A549 (cell line): ENCODE measurements at regions of chr11 and their contacts with region 1.

Region 1: DNA sequence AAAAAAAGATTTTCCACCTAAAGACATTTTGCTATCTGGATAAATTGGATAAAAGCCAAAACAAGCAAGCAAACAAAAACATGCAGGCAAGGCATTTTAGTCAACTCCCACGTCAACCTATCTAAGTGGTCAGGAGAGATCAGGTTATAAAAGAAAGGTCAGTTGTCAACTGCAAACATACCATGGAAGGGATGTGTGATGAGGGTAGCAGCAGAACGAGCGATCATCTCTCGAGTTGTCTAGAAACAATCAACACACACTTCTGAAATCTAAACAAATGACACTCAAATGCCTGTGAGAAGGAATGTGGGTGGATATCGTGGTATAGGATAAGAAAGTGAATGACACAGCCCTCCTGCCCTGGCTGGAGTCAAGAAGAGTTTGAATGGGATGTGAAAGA is 10.9 kb downstream of the MTCH2 start:
- DNase-seq: peak in 1 of 2 experiments; percentile 29
- ATAC-seq: peak in 1 of 2 experiments; percentile 56; a peak in 3 of 6 replicates
- H3K4me3 ChIP-seq: no peak overlapping the region
- H3K27ac ChIP-seq: no peak overlapping the region
- H3K4me1 ChIP-seq: no peaks in the 10 kb centered on the region
- CTCF ChIP-seq: no peak
- EP300 ChIP-seq: no peak
- POLR2A ChIP-seq: no peak
- RAD21 ChIP-seq: no peak

Region 2: GRCh38 chr11:47514825-47515647 is 116.4 kb before region 1 on chr11:
- CTCF ChIA-PET with region 1: no interaction called
- POLR2A ChIA-PET with region 1: no interaction called
- DNase-seq: peak in 1 of 2 experiments; percentile 26
- ATAC-seq: peak; percentile 69 to 70; a peak in 5 of 6 replicates
- H3K4me3 ChIP-seq: no peak overlapping the region
- H3K27ac ChIP-seq: peak overlapping the region in 1 of 2 experiments; percentile 79; a peak in 3 of 6 replicates
- H3K4me1 ChIP-seq: peaks cover 78% of the 10 kb centered on the region
- CTCF ChIP-seq: no peak
- EP300 ChIP-seq: no peak
- POLR2A ChIP-seq: no peak
- RAD21 ChIP-seq: no peak

Region 3: GRCh38 chr11:47565340-47566148 is 65.9 kb before region 1 on chr11 and contains the start of gene PTPMT1:
- CTCF ChIA-PET with region 1: no interaction called
- POLR2A ChIA-PET with region 1: interaction called, 11 read pairs
- DNase-seq: peak; percentile 55 to 70
- ATAC-seq: peak; percentile 95 to 97
- H3K4me3 ChIP-seq: peak within 1 kb of the TSS; percentile 92
- H3K27ac ChIP-seq: peak within 1 kb of the TSS; percentile 95 to 96
- H3K4me1 ChIP-seq: peaks cover 17% of the 10 kb centered on the region
- CTCF ChIP-seq: no peak
- EP300 ChIP-seq: no peak
- POLR2A ChIP-seq: peak; percentile 87
- RAD21 ChIP-seq: no peak
- polyA plus RNA-seq, gene PTPMT1: 58.8 and 69.2 TPM in 2 replicates

Region 4: DNA sequence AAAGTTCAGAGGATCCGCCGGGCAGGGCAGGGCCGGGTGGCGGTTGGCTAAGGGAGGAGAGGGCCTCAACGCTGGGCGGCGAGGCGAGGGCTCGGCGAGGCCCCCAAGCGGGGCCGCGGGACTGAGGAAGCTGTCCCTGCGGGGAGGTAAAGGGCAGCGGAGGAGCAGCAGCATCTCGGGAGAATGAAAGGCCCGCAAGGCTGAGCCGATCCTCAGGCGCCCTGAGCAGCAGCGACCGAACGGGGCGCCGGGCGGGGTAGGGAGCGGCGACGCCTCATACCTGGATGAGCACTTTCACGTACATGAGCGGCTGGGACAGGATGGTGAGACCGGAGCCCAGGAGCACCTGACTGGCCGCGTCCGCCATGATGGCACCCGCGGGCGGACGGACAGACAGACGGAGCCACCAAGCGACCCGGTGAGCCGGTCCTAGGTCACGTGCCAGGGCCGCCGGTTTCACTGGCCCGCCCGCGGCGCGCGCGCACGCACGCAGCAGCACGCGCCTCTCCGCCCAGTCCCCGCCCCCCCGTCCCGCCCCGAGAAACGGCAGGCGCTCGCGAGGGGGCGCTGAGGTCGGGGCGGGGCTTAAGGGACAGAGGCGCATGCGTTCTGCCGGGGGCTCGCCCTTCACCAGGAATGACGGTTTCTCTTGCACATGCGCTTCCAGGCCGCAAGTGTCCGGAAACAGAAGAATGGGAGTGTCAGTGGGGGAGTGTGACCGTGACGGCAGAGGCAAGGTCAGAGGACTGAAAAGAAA is 10.8 kb after region 1 on chr11 and contains the start of gene MTCH2:
- CTCF ChIA-PET with region 1: interaction called, 14 read pairs
- POLR2A ChIA-PET with region 1: no interaction called
- DNase-seq: peak; percentile 96 to 98
- ATAC-seq: peak; percentile 95 to 96
- H3K4me3 ChIP-seq: peak within 1 kb of the TSS; percentile 77
- H3K27ac ChIP-seq: peak within 1 kb of the TSS; percentile 93 to 97
- H3K4me1 ChIP-seq: peaks cover 18% of the 10 kb centered on the region; the same call in 2 of the 3 replicates
- CTCF ChIP-seq: peak; percentile 28; the same call in 2 of the 3 replicates
- EP300 ChIP-seq: no peak
- POLR2A ChIP-seq: peak; percentile 98
- RAD21 ChIP-seq: no peak
- polyA plus RNA-seq, gene MTCH2: 222 and 253 TPM in 2 replicates

Region 5: DNA sequence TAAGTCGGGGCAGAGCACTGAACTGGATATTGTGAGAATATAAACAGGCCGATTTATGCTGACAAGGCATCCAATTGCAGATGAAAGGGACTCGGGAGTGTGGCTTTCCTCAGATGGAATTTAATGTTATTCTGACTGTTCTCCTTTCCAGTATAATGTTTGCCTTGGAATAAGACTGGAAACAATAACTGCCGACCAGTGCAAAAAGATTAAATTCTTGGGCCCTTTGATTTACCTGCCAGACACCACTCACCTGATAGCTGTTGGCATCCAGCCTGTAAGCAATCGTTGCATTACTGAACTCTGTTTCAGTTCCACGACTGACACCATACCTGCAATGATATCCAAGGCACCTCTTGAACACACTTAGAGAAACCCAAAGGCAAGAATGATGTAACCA is 205.8 kb after region 1 on chr11:
- CTCF ChIA-PET with region 1: no interaction called
- POLR2A ChIA-PET with region 1: no interaction called
- DNase-seq: no peak
- ATAC-seq: no peak
- H3K4me3 ChIP-seq: no peak overlapping the region
- H3K27ac ChIP-seq: no peak overlapping the region
- H3K4me1 ChIP-seq: no peaks in the 10 kb centered on the region
- CTCF ChIP-seq: no peak
- EP300 ChIP-seq: no peak
- POLR2A ChIP-seq: no peak
- RAD21 ChIP-seq: no peak